Sigmoid colon (tissue), 7 donors: ENCODE measurements at regions of chr15 and their contacts with region 1.

Region 1: GRCh38 chr15:58749532-58750337 is at the start of gene ADAM10:
- DNase-seq: peak; percentile 100
- H3K4me3 ChIP-seq: peak within 1 kb of the TSS; percentile 93 to 99 (median 96)
- H3K27ac ChIP-seq: peak within 1 kb of the TSS; percentile 98 to 99 (median 98)
- H3K4me1 ChIP-seq: peaks cover 0 to 27% (median 26%) of the 10 kb centered on the region in 4 donors
- H3K27me3 ChIP-seq: no peaks in the 10 kb centered on the region
- CTCF ChIP-seq: no peak
- EP300 ChIP-seq: peak in 2 of 4 donors; percentile 9 to 15
- POLR2A ChIP-seq: peak; percentile 85
- total RNA-seq, gene ADAM10: 44.9 to 70.9 (median 57.5) TPM

Region 2: GRCh38 chr15:58227706-58228543 is 521.8 kb before region 1 on chr15:
- intact Hi-C with region 1: loop called (anchors 10 kb)
- DNase-seq: peak; percentile 82
- H3K4me3 ChIP-seq: no peak overlapping the region
- H3K27ac ChIP-seq: no peak overlapping the region
- H3K4me1 ChIP-seq: peaks cover 0 to 11% (median 7%) of the 10 kb centered on the region in 4 donors
- H3K27me3 ChIP-seq: no peaks in the 10 kb centered on the region
- CTCF ChIP-seq: peak in 3 of 4 experiments; percentile 61 to 72 (median 68)
- EP300 ChIP-seq: no peak
- POLR2A ChIP-seq: no peak

Region 3: DNA sequence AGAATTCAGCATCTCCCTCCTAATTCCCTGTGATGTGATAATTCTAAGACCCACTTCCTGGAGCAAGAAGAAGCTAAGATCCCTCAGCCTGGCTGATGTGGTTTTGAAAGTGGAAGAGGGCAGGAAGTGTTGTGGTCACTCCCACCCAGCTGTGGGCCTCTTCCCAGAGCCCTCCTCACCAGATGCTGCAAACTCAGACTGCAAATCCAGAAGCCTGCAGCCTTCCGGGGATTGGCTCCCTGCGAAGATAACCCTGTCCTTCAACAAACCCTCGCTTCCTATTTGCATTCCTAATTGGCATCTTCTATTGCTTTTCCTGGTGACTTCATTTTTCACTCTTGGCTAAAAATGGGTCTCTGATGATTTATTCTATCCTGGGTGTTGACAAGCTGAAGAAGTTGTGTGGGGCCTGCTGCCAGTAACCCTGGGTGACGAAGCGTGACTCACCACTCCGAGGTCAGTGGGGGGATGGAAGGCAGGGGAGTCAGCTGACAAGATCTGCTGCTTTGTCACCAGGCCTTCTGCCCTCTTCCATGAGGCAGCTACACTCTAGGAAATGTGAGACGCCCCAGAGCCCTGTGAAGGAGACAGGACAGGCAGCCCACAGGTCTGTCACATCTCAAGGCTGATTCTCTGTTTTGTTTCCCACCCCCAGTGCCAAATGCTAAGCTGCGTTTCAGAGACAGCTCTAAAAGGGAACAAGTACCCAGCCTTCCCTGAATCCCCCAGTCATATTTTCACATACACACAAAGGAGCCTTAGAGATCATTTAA is 417.6 kb before region 1 on chr15:
- intact Hi-C with region 1: loop called (anchors 5 kb)
- DNase-seq: peak; percentile 98
- H3K4me3 ChIP-seq: peak overlapping the region in 1 of 4 donors; percentile 1
- H3K27ac ChIP-seq: peak overlapping the region; percentile 82 to 88 (median 84)
- H3K4me1 ChIP-seq: peaks cover 0 to 37% (median 30%) of the 10 kb centered on the region in 4 donors
- H3K27me3 ChIP-seq: no peaks in the 10 kb centered on the region
- CTCF ChIP-seq: no peak
- EP300 ChIP-seq: peak in 3 of 4 donors; percentile 4 to 91 (median 74)
- POLR2A ChIP-seq: no peak

Region 4: GRCh38 chr15:58770857-58771620 is 21.3 kb after region 1 on chr15 and contains the start of gene MINDY2:
- intact Hi-C with region 1: loop called (anchors 1 kb)
- DNase-seq: peak; percentile 99
- H3K4me3 ChIP-seq: peak within 1 kb of the TSS; percentile 71 to 86 (median 84)
- H3K27ac ChIP-seq: peak within 1 kb of the TSS; percentile 93 to 99 (median 96)
- H3K4me1 ChIP-seq: peaks cover 0 to 42% (median 37%) of the 10 kb centered on the region in 4 donors
- H3K27me3 ChIP-seq: no peaks in the 10 kb centered on the region
- CTCF ChIP-seq: peak in 1 of 4 experiments; percentile 33
- EP300 ChIP-seq: no peak
- POLR2A ChIP-seq: peak; percentile 59 to 88
- total RNA-seq, gene MINDY2: 18.0 to 28.5 (median 21.2) TPM

Region 5: GRCh38 chr15:58873267-58873666 is 123.5 kb after region 1 on chr15:
- intact Hi-C with region 1: no loop called
- DNase-seq: no peak
- H3K4me3 ChIP-seq: no peak overlapping the region
- H3K27ac ChIP-seq: no peak overlapping the region
- H3K4me1 ChIP-seq: no peaks in the 10 kb centered on the region
- H3K27me3 ChIP-seq: no peaks in the 10 kb centered on the region
- CTCF ChIP-seq: no peak
- EP300 ChIP-seq: no peak
- POLR2A ChIP-seq: no peak